Sigmoid colon (tissue), 7 donors: ENCODE measurements at regions of chr9 and their contacts with region 1.

Region 1: DNA sequence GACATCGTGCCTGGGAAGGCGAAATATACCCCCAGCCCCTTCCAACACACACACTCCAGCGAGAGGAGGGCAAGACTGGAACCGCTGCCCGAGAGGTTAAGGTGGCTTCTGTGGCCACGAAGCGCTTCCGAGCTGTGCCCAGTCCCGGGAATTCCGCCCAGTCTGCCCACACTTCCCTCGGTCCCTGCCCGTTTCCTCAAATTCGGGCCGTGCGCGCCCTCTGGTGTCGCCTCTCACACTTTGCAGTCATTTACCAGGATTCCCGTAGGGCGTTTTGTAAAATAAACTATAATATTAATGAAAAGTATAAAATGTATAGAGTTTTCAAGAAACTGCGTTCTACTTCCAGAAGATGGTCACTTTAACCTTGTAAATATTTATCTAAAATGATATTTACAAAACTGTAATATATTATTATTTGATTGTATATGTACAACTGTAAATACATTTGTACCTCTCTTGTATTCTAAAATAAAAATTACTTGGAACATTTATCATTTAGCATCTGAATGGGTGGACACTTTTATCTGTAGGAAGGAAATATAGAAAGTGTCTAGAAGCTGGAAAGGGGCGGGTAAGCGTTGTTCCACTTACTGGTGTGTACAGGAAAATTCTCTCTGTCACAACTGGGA is 11.0 kb upstream of the EXOSC2 start:
- DNase-seq: peak; percentile 87
- H3K4me3 ChIP-seq: peak overlapping the region; percentile 36 to 57 (median 51)
- H3K27ac ChIP-seq: peak overlapping the region in 1 of 4 donors; percentile 45
- H3K4me1 ChIP-seq: peaks cover 0 to 16% (median 15%) of the 10 kb centered on the region in 4 donors
- H3K27me3 ChIP-seq: peaks cover 0 to 10% (median 3%) of the 10 kb centered on the region in 3 donors
- CTCF ChIP-seq: peak; percentile 44 to 81 (median 75)
- EP300 ChIP-seq: no peak
- POLR2A ChIP-seq: no peak

Region 2: GRCh38 chr9:130461218-130461630 is 221.4 kb before region 1 on chr9:
- intact Hi-C with region 1: loop called (anchors 1 kb)
- DNase-seq: peak; percentile 75
- H3K4me3 ChIP-seq: no peak overlapping the region
- H3K27ac ChIP-seq: no peak overlapping the region
- H3K4me1 ChIP-seq: peaks cover 0 to 8% (median 6%) of the 10 kb centered on the region in 4 donors
- H3K27me3 ChIP-seq: peaks cover 0 to 3% (median 0%) of the 10 kb centered on the region in 3 donors
- CTCF ChIP-seq: peak; percentile 81 to 93 (median 90)
- EP300 ChIP-seq: no peak
- POLR2A ChIP-seq: no peak

Region 3: DNA sequence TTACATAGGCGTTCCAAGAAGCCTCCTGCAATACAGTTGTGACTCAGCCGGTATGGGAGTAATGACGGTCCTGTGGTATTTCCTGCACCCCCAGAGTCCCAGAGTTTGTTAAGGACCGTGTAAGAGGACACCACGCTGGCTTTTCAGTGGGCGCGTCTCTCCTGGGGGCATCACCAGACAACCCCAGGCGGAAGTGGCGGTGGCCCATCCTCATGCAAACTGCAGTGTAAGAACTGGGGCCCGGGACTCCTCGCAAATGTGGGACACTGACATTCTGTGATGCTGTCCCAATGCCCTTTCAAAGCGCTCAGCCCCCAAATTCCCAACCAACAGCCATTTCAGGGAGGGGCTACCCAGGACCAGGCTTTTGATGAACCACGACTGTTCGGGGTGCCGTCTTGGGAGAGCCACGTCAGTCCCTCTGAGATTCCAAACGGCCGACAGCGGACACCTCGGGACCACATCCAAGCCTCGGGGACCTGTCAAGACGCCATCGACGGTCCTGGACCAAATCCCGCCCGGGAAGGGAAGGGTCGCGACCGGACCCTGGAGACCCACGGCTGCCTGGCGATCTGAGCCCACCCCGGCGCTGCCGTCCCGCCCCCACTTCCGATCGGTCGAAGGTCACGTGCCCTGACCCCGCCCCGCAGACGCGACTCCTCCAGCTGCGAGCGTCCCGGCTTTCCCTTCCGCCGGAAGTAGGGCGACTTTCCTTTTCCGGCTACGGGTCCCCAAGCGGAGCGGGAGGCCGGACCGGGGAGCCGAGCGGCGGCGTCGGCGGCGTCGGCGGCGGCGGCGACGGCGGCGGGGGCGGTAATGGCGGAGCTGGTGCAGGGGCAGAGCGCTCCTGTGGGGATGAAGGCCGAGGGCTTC is 103.5 kb before region 1 on chr9 and contains the start of gene FUBP3:
- intact Hi-C with region 1: loop called (anchors 5 kb)
- DNase-seq: peak; percentile 97
- H3K4me3 ChIP-seq: peak within 1 kb of the TSS; percentile 81 to 100 (median 94)
- H3K27ac ChIP-seq: peak within 1 kb of the TSS; percentile 90 to 95 (median 92)
- H3K4me1 ChIP-seq: peaks cover 0 to 41% (median 33%) of the 10 kb centered on the region in 4 donors
- H3K27me3 ChIP-seq: no peaks in the 10 kb centered on the region
- CTCF ChIP-seq: no peak
- EP300 ChIP-seq: no peak
- POLR2A ChIP-seq: peak; percentile 89 to 91
- total RNA-seq, gene FUBP3: 41.3 to 44.4 (median 42.9) TPM

Region 4: DNA sequence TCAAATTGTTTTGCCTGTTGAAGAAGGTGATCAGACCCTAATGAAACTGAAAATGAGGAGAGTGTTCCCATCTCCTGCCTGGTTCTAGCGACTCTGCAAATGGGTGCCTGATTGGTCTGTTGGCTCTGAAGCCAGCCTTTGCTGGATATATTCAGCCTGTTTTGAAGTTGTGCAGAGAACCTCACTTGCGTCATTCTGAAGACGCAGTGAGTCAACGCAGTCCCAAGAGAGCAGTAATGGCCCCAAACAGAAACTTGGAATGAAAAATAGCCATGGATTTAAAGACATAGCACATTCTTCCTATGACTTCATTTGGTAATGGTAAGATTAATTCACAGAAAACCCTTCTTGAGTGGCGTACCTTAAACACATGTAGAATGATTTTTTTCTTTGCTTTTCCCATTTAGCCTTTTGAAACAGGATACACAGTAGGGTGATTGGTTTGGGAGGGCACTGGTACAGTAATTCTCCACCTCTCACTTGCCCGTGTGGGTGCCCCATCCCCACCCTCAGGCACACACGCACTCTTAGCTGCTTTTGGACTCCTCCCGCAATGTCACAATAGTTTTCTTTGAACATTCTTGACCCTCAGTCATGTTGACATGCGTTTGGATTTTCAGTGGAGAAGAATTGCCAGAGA is 98.4 kb after region 1 on chr9:
- intact Hi-C with region 1: no loop called
- DNase-seq: peak; percentile 95
- H3K4me3 ChIP-seq: peak overlapping the region; percentile 32 to 46 (median 38)
- H3K27ac ChIP-seq: peak overlapping the region; percentile 91 to 97 (median 96)
- H3K4me1 ChIP-seq: peaks cover 0 to 73% (median 63%) of the 10 kb centered on the region in 4 donors
- H3K27me3 ChIP-seq: no peaks in the 10 kb centered on the region
- CTCF ChIP-seq: no peak
- EP300 ChIP-seq: peak; percentile 96 to 99 (median 98)
- POLR2A ChIP-seq: peak; percentile 83 to 88